SK-N-SH (cell line): ENCODE measurements at regions of chr2 and their contacts with region 1.

Region 1: GRCh38 chr2:217650716-217651360 is 352.0 kb downstream of the TNS1 start:
- DNase-seq: peak; percentile 55
- H3K4me3 ChIP-seq: no peak overlapping the region
- H3K27ac ChIP-seq: no peak overlapping the region
- H3K4me1 ChIP-seq: peaks cover 0 to 16% of the 10 kb centered on the region in 2 experiments; a peak in 2 of 4 replicates
- H3K27me3 ChIP-seq: no peaks in the 10 kb centered on the region
- CTCF ChIP-seq: peak; percentile 74
- EP300 ChIP-seq: no peak
- RAD21 ChIP-seq: peak; percentile 66

Region 2: GRCh38 chr2:217585362-217585761 is 65.5 kb before region 1 on chr2:
- CTCF ChIA-PET with region 1: interaction called, 13 read pairs
- POLR2A ChIA-PET with region 1: no interaction called
- DNase-seq: no peak
- H3K4me3 ChIP-seq: no peak overlapping the region
- H3K27ac ChIP-seq: no peak overlapping the region
- H3K4me1 ChIP-seq: no peaks in the 10 kb centered on the region
- H3K27me3 ChIP-seq: no peaks in the 10 kb centered on the region
- CTCF ChIP-seq: no peak
- EP300 ChIP-seq: no peak
- RAD21 ChIP-seq: no peak

Region 3: GRCh38 chr2:217636991-217637944 is 13.6 kb before region 1 on chr2:
- CTCF ChIA-PET with region 1: interaction called, 39 read pairs
- POLR2A ChIA-PET with region 1: no interaction called
- DNase-seq: peak; percentile 67
- H3K4me3 ChIP-seq: no peak overlapping the region
- H3K27ac ChIP-seq: peak overlapping the region in 1 of 2 experiments; percentile 87; a peak in 2 of 4 replicates
- H3K4me1 ChIP-seq: peaks cover 0 to 16% of the 10 kb centered on the region in 2 experiments; a peak in 2 of 4 replicates
- H3K27me3 ChIP-seq: no peaks in the 10 kb centered on the region
- CTCF ChIP-seq: no peak
- EP300 ChIP-seq: peak in 1 of 2 experiments; percentile 74; a peak in 2 of 4 replicates
- RAD21 ChIP-seq: no peak; the same call in 1 of the 2 replicates

Region 4: GRCh38 chr2:217672491-217672900 is 21.7 kb after region 1 on chr2:
- CTCF ChIA-PET with region 1: interaction called, 28 read pairs
- POLR2A ChIA-PET with region 1: no interaction called
- DNase-seq: no peak
- H3K4me3 ChIP-seq: no peak overlapping the region
- H3K27ac ChIP-seq: no peak overlapping the region
- H3K4me1 ChIP-seq: no peaks in the 10 kb centered on the region
- H3K27me3 ChIP-seq: no peaks in the 10 kb centered on the region
- CTCF ChIP-seq: no peak
- EP300 ChIP-seq: no peak
- RAD21 ChIP-seq: no peak

Region 5: GRCh38 chr2:217756375-217757107 is 105.7 kb after region 1 on chr2:
- CTCF ChIA-PET with region 1: interaction called, 16 read pairs
- POLR2A ChIA-PET with region 1: no interaction called
- DNase-seq: peak; percentile 93
- H3K4me3 ChIP-seq: no peak overlapping the region
- H3K27ac ChIP-seq: no peak overlapping the region
- H3K4me1 ChIP-seq: peaks cover 5 to 6% of the 10 kb centered on the region in 2 experiments; a peak in 2 of 4 replicates
- H3K27me3 ChIP-seq: no peaks in the 10 kb centered on the region
- CTCF ChIP-seq: peak; percentile 82
- EP300 ChIP-seq: no peak
- RAD21 ChIP-seq: peak; percentile 79

Region 6: GRCh38 chr2:217774232-217774631 is 123.4 kb after region 1 on chr2:
- CTCF ChIA-PET with region 1: no interaction called
- POLR2A ChIA-PET with region 1: no interaction called
- DNase-seq: no peak
- H3K4me3 ChIP-seq: no peak overlapping the region
- H3K27ac ChIP-seq: no peak overlapping the region
- H3K4me1 ChIP-seq: no peaks in the 10 kb centered on the region
- H3K27me3 ChIP-seq: no peaks in the 10 kb centered on the region
- CTCF ChIP-seq: no peak
- EP300 ChIP-seq: no peak
- RAD21 ChIP-seq: no peak

Region 7: DNA sequence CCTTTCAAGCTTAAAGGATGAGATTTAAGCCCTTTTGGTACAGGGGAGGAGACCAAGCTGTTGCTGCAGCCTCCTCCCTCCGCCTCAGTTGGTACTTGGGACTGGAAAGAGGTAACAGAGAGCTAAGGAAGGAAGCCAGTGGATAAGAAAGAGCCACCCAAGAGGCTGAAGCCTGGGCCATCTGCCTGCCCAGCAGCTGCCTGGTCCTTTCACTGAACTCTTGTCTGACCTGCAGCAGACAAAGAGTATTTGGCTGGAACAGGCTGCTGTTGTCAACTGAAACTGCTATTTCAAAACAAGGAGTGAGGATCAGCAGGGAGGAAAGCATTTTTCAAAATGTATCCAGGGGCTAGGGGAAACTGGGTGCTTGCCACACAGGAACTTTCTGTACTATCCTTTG is 321.7 kb after region 1 on chr2:
- CTCF ChIA-PET with region 1: no interaction called
- POLR2A ChIA-PET with region 1: no interaction called
- DNase-seq: no peak
- H3K4me3 ChIP-seq: no peak overlapping the region
- H3K27ac ChIP-seq: no peak overlapping the region; a peak in 1 of 4 replicates
- H3K4me1 ChIP-seq: peaks cover 0 to 3% of the 10 kb centered on the region in 2 experiments; a peak in 1 of 4 replicates
- H3K27me3 ChIP-seq: no peaks in the 10 kb centered on the region
- CTCF ChIP-seq: no peak
- EP300 ChIP-seq: no peak
- RAD21 ChIP-seq: no peak